Activated B cell treated with CpG ODN at 0.5 μM for 24 hours (primary cell): ENCODE measurements at regions of chr9 and their contacts with region 1.

Region 1: GRCh38 chr9:6955251-6955921 is 197.6 kb downstream of the KDM4C start:
- DNase-seq: no peak
- ATAC-seq: no peak
- H3K4me3 Mint-ChIP-seq: peak overlapping the region; percentile 4
- H3K27ac Mint-ChIP-seq: peak overlapping the region; percentile 10
- H3K4me1 Mint-ChIP-seq: peaks cover 37% of the 10 kb centered on the region
- H3K27me3 Mint-ChIP-seq: no peaks in the 10 kb centered on the region
- CTCF ChIP-seq: no peak

Region 2: DNA sequence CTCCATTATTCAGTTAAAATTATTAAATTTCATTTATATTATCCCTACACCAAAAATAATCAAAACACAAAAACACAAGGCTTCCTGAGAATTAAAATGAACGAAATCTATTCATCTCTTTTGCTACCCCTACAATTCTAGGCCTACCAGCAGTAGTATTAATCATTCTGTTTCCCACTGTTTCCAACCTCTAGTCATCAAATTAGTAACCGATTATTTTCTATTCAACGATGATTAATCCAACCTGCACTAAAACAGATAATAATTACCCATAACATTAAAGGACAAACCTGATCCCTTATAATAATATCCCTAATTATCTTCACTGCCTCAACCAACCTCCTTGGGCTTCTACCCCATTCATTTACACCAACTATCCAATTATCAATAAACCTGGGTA is 1855.9 kb before region 1 on chr9:
- CTCF ChIA-PET with region 1: no interaction called
- POLR2A ChIA-PET with region 1: no interaction called
- intact Hi-C with region 1: no loop called
- DNase-seq: no peak
- ATAC-seq: no peak
- H3K4me3 Mint-ChIP-seq: no peak overlapping the region
- H3K27ac Mint-ChIP-seq: no peak overlapping the region
- H3K4me1 Mint-ChIP-seq: no peaks in the 10 kb centered on the region
- H3K27me3 Mint-ChIP-seq: no peaks in the 10 kb centered on the region
- CTCF ChIP-seq: no peak

Region 3: DNA sequence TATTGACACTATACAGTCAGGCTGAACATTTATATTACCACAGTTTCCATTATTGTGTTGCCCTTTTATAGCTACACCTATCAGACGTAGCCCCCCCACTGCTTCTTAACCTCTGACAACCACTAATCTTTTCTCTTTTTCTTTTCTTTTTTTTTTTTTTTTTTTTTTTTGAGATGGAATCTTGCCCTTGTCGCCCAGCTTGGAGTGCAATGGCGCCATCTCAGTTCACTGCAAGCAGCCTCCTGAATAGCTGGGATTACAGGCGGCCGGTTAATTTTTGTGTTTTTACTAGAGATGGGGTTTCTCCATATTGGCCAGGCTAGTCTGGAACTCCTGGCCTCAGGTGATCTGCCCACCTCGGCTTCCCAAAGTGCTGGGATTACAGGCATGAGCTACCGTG is 467.0 kb before region 1 on chr9:
- CTCF ChIA-PET with region 1: no interaction called
- POLR2A ChIA-PET with region 1: no interaction called
- intact Hi-C with region 1: no loop called
- DNase-seq: no peak
- ATAC-seq: no peak
- H3K4me3 Mint-ChIP-seq: no peak overlapping the region
- H3K27ac Mint-ChIP-seq: no peak overlapping the region
- H3K4me1 Mint-ChIP-seq: no peaks in the 10 kb centered on the region
- H3K27me3 Mint-ChIP-seq: no peaks in the 10 kb centered on the region
- CTCF ChIP-seq: no peak

Region 4: DNA sequence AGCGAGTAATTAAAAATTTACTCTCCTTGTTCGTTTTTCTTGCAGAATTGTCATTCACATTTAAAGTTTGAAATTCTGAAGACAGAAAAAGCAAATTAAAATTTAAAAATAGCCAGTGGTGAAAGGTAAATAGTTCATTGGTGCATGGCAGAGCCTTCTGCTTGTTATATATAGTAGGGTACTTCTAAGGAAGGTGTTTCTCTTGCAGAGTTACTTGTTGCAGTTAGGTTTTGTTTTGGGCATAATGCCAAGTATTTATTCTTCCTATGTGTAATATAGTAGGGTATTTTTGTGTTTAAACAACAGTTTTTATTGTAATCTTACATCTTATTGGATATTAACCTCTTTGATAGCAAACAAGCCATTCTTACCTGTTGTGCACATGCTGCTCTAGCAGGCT is 18.2 kb before region 1 on chr9:
- CTCF ChIA-PET with region 1: no interaction called
- POLR2A ChIA-PET with region 1: interaction called, 3 read pairs
- intact Hi-C with region 1: loop called (anchors 2 kb)
- DNase-seq: no peak
- ATAC-seq: no peak
- H3K4me3 Mint-ChIP-seq: no peak overlapping the region
- H3K27ac Mint-ChIP-seq: no peak overlapping the region
- H3K4me1 Mint-ChIP-seq: peaks cover 32% of the 10 kb centered on the region
- H3K27me3 Mint-ChIP-seq: no peaks in the 10 kb centered on the region
- CTCF ChIP-seq: no peak